Activated CD8-positive, alpha-beta T cell treated with anti-CD3 and anti-CD28 coated beads for 36 hours (primary cell): ENCODE measurements at regions of chr19 and their contacts with region 1.

Region 1: GRCh38 chr19:32224371-32225244 is 120.8 kb upstream of the ZNF507 start:
- DNase-seq: peak; percentile 62
- ATAC-seq: peak; percentile 87
- H3K4me3 Mint-ChIP-seq: peak overlapping the region; percentile 63
- H3K27ac Mint-ChIP-seq: no peak overlapping the region
- H3K4me1 Mint-ChIP-seq: peaks cover 13% of the 10 kb centered on the region
- H3K27me3 Mint-ChIP-seq: peaks cover 32% of the 10 kb centered on the region
- CTCF ChIP-seq: peak; percentile 100

Region 2: DNA sequence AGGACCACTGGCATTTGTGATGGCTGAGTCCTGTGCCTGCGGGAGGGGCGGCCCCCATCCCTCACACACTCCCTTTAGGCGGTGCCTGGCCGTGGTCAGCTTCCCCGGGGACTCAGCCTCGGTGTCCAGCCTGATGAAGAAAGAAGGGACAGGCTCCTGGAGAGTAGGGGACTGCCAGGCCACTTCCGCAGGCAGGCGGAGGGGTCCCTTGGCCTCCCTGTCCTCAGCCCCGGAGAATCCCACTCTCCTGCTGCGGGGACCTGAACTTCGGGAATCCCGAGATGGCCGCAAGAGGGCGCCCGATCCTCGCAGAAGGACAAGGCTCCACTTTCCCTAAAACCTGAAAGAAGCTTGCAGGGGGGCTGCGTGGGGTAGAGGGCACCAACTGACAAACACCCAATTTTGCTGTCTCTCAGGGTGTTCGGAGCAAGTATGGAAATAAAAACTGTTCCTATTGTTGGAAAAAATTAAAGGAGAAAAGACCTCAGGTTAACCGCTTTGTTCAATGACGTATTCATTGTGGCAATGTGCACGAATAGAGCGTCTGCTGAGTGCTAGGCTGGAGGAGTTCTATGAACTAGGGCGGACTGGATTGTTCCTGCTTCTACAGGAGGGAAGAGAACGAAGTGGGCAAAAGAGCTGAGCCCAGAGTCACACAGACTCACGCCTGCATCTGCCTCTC is 1555.1 kb before region 1 on chr19:
- CTCF ChIA-PET with region 1: interaction called, 11 read pairs
- POLR2A ChIA-PET with region 1: no interaction called
- intact Hi-C with region 1: loop called (anchors 10 kb)
- DNase-seq: peak; percentile 66
- ATAC-seq: no peak
- H3K4me3 Mint-ChIP-seq: no peak overlapping the region
- H3K27ac Mint-ChIP-seq: no peak overlapping the region
- H3K4me1 Mint-ChIP-seq: no peaks in the 10 kb centered on the region
- H3K27me3 Mint-ChIP-seq: peaks cover 20% of the 10 kb centered on the region
- CTCF ChIP-seq: peak; percentile 80

Region 3: DNA sequence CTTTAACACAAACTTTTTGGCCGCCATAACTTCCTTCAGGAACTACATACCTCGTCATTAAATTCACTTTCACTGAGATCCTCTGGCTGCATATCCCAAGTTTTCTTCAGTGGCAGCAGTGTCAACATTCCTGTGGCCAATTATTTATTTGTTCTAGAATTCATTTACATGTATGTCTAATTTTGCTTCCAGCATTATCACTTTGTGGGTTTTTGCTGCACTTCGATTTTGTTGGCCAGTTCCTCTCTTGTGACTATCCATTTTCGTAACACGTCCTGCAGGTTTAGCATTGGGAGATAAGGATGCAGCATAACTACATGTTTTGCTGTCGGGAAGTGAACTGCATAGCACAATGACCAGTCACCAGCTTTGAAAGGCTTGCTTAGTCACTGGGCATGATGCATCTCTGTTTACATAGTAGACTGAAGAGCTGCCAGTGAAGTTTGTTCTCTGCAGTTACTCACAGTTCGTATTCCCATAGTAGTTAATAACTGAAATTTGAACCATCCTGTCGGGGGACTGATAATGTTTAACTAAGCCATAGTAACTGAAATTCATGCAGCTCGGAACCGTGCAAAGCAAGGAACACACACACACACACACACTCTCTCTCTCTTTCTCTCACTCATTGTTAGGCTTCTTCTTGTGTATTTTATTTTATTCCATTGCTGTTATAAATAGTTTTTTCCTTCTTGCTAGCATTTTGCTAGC is 149.1 kb after region 1 on chr19:
- CTCF ChIA-PET with region 1: no interaction called
- POLR2A ChIA-PET with region 1: no interaction called
- intact Hi-C with region 1: no loop called
- DNase-seq: no peak
- ATAC-seq: no peak
- H3K4me3 Mint-ChIP-seq: no peak overlapping the region
- H3K27ac Mint-ChIP-seq: no peak overlapping the region
- H3K4me1 Mint-ChIP-seq: peaks cover 2% of the 10 kb centered on the region
- H3K27me3 Mint-ChIP-seq: no peaks in the 10 kb centered on the region
- CTCF ChIP-seq: no peak